ENCODE measurements at regions of chr3 and their contacts with region 1.

Region 1: GRCh38 chr3:126679318-126679751 is 24.4 kb upstream of the TXNRD3 start:
- DNase-seq: peak; percentile 84
- ATAC-seq: peak; percentile 94
- H3K4me3 ChIP-seq: no peak overlapping the region
- H3K27ac ChIP-seq: no peak overlapping the region
- H3K4me1 ChIP-seq: no peaks in the 10 kb centered on the region; the same call in 1 of the 2 replicates
- H3K27me3 ChIP-seq: no peaks in the 10 kb centered on the region
- CTCF ChIP-seq: peak; percentile 81

Region 2: GRCh38 chr3:126613479-126614188 is 65.7 kb before region 1 on chr3:
- CTCF ChIA-PET with region 1: no interaction called
- POLR2A ChIA-PET with region 1: interaction called, 33 read pairs
- intact Hi-C with region 1: no loop called
- DNase-seq: no peak
- ATAC-seq: no peak
- H3K4me3 ChIP-seq: no peak overlapping the region
- H3K27ac ChIP-seq: no peak overlapping the region
- H3K4me1 ChIP-seq: peaks cover 3% of the 10 kb centered on the region; the same call in 1 of the 2 replicates
- H3K27me3 ChIP-seq: no peaks in the 10 kb centered on the region
- CTCF ChIP-seq: no peak

Region 3: DNA sequence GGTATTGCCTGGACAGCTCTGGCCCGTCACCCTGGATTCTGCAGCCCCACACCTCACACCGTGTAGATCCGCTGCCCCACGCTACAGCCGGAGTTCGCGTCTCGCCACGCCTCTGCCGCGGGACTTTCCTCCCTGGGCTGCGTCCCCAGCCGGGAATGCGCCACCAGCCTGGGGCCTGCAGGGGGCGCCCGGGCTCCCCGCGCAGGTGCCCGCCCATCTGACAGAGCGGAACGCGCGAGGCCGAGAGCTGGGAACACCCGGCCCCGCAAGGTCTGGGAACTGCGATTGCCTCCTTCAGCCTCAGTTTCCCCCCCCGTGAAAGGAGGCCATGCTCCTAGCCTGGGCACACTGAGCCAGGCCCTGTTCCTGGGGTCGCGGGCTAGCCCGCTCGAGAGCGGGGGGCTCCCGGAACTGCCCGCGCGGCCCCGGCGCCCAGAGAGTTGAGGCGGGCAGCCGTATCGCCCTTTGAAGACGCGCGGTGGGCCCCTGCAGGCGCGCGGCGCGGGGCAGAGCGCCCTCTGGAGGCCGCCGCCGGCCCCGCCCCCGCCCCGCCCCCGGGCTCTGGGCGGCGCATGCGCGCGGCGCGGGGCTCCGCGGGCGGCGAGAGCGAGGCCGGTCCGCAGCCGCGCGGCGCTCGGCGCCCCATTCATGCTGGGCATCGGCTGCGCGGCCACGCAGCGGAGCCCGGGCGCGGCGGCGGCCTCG is 303.3 kb after region 1 on chr3 and contains the start of gene PLXNA1:
- CTCF ChIA-PET with region 1: no interaction called
- POLR2A ChIA-PET with region 1: no interaction called
- intact Hi-C with region 1: loop called (anchors 5 kb)
- DNase-seq: peak; percentile 77
- ATAC-seq: peak; percentile 74
- H3K4me3 ChIP-seq: peak within 1 kb of the TSS; percentile 83
- H3K27ac ChIP-seq: peak within 1 kb of the TSS; percentile 30; the same call in 1 of the 2 replicates
- H3K4me1 ChIP-seq: peaks cover 7% of the 10 kb centered on the region
- H3K27me3 ChIP-seq: no peaks in the 10 kb centered on the region
- CTCF ChIP-seq: peak; percentile 71
- total RNA-seq, gene PLXNA1: 30.0 and 38.0 TPM in 2 replicates

Region 4: DNA sequence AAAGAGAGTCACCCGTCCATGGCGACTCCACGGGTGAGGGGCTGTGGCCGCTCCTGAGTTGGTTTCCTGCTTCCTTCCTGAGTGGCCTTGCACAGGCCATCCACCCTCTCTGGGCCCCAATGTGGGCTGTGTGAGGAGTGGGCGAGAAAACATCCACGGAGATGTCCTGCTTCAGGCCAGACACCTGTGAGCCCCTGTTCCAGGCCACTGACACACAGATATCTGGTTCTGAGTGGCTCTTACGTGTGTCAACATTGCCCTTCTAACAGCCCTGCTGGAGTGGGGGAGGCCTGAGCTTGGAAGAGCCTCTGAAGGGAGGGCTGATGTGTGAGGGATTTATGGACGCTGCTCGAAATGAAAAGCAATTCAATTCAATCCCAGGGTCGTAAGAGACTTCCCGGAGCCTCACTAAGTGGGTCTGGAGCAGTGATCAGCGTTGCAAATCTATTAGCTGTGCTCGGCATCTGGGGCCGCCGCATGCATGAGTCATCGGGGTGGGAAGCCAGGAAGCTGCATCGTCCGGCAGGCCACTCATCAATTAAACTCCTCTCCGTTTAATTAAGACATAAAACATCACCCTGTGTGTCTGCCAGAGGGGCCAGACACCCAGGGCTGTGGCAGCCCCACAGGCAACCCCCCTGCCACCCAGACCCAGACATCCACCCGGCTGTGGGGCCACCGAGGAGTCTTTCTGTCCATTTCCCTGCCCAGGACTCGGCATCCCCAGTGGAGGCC is 493.6 kb after region 1 on chr3:
- CTCF ChIA-PET with region 1: no interaction called
- POLR2A ChIA-PET with region 1: no interaction called
- intact Hi-C with region 1: loop called (anchors 5 kb)
- DNase-seq: peak; percentile 38
- ATAC-seq: peak; percentile 37
- H3K4me3 ChIP-seq: no peak overlapping the region
- H3K27ac ChIP-seq: no peak overlapping the region
- H3K4me1 ChIP-seq: peaks cover 4% of the 10 kb centered on the region; the same call in 1 of the 2 replicates
- H3K27me3 ChIP-seq: peaks cover 23% of the 10 kb centered on the region
- CTCF ChIP-seq: no peak

Region 5: DNA sequence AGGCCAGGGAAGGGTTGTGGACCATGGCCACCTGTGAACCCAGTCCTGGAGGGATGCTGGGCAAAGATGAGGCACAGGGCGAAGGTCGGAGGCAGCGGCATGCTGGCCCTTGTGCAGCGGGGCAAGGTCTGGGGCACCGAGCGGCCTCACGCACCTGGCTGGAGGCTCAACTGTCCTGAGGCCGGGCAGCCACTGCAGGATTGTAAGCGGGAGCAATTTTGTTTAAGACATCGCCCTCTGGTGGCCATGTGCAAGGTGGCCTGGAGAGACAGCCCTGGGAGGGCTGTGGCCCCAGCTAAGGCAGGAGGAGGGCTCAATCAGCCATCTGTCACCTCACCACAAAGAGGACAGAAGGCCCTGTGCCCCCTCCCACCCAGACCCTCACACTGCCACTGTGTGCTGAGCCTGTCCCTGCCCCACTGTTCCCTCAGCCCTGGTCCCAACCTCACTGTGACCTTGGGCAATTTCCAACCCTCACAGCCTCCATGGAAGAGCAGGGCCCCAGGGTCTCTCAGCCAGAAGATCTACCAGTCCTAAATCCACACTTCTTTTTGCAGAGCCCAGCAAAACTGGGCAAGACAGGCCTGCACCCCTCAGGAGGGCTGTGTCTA is 865.0 kb after region 1 on chr3:
- CTCF ChIA-PET with region 1: no interaction called
- POLR2A ChIA-PET with region 1: no interaction called
- intact Hi-C with region 1: loop called (anchors 5 kb)
- DNase-seq: peak; percentile 70
- ATAC-seq: peak; percentile 81
- H3K4me3 ChIP-seq: no peak overlapping the region
- H3K27ac ChIP-seq: no peak overlapping the region
- H3K4me1 ChIP-seq: no peaks in the 10 kb centered on the region
- H3K27me3 ChIP-seq: no peaks in the 10 kb centered on the region; the same call in 1 of the 2 replicates
- CTCF ChIP-seq: peak; percentile 72